Transverse colon (tissue), 4 donors: ENCODE measurements at regions of chr19 and their contacts with region 1.

Region 1: GRCh38 chr19:13794757-13795589 is at the start of gene ZSWIM4:
- DNase-seq: peak; percentile 99
- H3K4me3 ChIP-seq: peak within 1 kb of the TSS; percentile 75 to 96 (median 88)
- H3K27ac ChIP-seq: peak within 1 kb of the TSS; percentile 92 to 95 (median 92)
- H3K4me1 ChIP-seq: peaks cover 9 to 36% (median 32%) of the 10 kb centered on the region in 4 donors
- H3K27me3 ChIP-seq: no peaks in the 10 kb centered on the region
- CTCF ChIP-seq: no peak
- EP300 ChIP-seq: no peak
- POLR2A ChIP-seq: peak; percentile 70
- total RNA-seq, gene ZSWIM4: 2.3 to 5.1 (median 2.9) TPM

Region 2: GRCh38 chr19:13373602-13374001 is 421.4 kb before region 1 on chr19:
- in situ Hi-C with region 1: no loop called
- intact Hi-C with region 1: no loop called
- DNase-seq: no peak
- H3K4me3 ChIP-seq: no peak overlapping the region
- H3K27ac ChIP-seq: no peak overlapping the region
- H3K4me1 ChIP-seq: no peaks in the 10 kb centered on the region
- H3K27me3 ChIP-seq: no peaks in the 10 kb centered on the region
- CTCF ChIP-seq: no peak
- EP300 ChIP-seq: no peak
- POLR2A ChIP-seq: no peak

Region 3: GRCh38 chr19:13846557-13847406 is 51.8 kb after region 1 on chr19:
- in situ Hi-C with region 1: no loop called
- intact Hi-C with region 1: loop called (anchors 5 kb)
- DNase-seq: peak; percentile 93
- H3K4me3 ChIP-seq: peak overlapping the region; percentile 30 to 57 (median 49)
- H3K27ac ChIP-seq: peak overlapping the region; percentile 99 to 100 (median 100)
- H3K4me1 ChIP-seq: peaks cover 48 to 74% (median 56%) of the 10 kb centered on the region in 4 donors
- H3K27me3 ChIP-seq: no peaks in the 10 kb centered on the region
- CTCF ChIP-seq: no peak
- EP300 ChIP-seq: peak; percentile 87
- POLR2A ChIP-seq: peak; percentile 30